ENCODE measurements at regions of chr2 and their contacts with region 1.

Region 1: GRCh38 chr2:40032650-40033319 is 253.7 kb upstream of the THUMPD2 start:
- DNase-seq: no peak
- H3K4me3 ChIP-seq: no peak overlapping the region
- H3K27ac ChIP-seq: no peak overlapping the region
- H3K4me1 ChIP-seq: no peaks in the 10 kb centered on the region
- H3K27me3 ChIP-seq: no peaks in the 10 kb centered on the region
- CTCF ChIP-seq: no peak

Region 2: GRCh38 chr2:39094852-39095306 is 937.9 kb before region 1 on chr2:
- intact Hi-C with region 1: loop called (anchors 5 kb)
- DNase-seq: no peak
- H3K4me3 ChIP-seq: no peak overlapping the region
- H3K27ac ChIP-seq: no peak overlapping the region
- H3K4me1 ChIP-seq: peaks cover 0 to 51% (median 13%) of the 10 kb centered on the region in 4 donors
- H3K27me3 ChIP-seq: no peaks in the 10 kb centered on the region
- CTCF ChIP-seq: no peak

Region 3: DNA sequence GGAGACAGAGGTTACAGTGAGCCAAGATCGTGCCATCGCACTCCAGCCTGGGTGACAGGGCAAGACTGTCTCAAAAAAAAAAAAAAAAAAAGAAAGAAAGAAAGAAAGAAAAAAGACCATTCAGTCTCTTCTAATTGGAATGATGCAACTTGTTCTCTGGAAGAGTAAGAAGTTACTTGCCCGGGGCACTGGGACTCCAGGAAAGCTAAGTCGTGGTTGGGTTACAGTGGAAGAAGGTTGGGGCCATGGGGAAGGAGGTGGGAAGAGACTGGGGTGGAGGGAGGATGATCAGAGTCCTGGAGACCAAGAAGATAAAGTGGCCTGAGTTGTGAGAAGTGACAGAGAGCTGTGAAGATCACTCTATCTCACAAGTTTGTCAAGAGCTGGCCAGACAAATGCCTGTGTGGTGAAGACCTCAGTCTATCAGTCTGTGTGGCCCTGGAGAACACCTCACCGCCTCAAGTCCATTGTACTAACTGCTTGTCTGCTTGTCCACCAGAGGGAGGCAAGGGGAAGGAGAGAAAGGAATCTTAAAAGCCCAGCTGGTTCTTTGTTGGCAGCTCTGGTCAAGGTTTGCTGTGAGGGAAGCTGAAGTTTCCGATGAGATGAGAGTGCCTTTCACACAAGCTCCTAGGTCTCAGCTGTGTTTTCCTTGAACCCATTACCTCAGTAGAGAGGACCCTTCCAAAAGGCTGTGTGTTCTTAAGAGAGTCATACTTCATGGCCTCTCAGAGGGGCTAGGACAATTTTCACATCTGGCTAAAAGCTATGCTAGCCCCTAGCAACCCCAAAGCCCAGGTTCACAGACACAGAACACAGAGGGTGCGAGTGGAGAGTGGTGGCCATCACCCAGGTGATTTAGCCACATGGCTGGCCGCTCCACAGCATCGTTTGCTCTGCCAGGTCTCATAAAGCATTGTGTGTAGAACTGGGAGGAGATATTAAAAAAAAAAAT is 439.1 kb before region 1 on chr2:
- intact Hi-C with region 1: no loop called
- DNase-seq: no peak
- H3K4me3 ChIP-seq: no peak overlapping the region
- H3K27ac ChIP-seq: no peak overlapping the region
- H3K4me1 ChIP-seq: peaks cover 0 to 3% (median 0%) of the 10 kb centered on the region in 4 donors
- H3K27me3 ChIP-seq: no peaks in the 10 kb centered on the region
- CTCF ChIP-seq: peak; percentile 55 to 61

Measured in tibial artery (tissue), 4 donors.